Activated CD4-positive, alpha-beta T cell treated with anti-CD3 and anti-CD28 coated beads for 36 hours (primary cell): ENCODE measurements at regions of chr18 and their contacts with region 1.

Region 1: GRCh38 chr18:35949903-35950627 is 22.4 kb upstream of the RMP24 start:
- DNase-seq: peak; percentile 67
- ATAC-seq: peak; percentile 70
- H3K4me3 Mint-ChIP-seq: peak overlapping the region; percentile 75
- H3K27ac Mint-ChIP-seq: no peak overlapping the region
- H3K4me1 Mint-ChIP-seq: peaks cover 1% of the 10 kb centered on the region
- H3K27me3 Mint-ChIP-seq: peaks cover 19% of the 10 kb centered on the region

Region 2: DNA sequence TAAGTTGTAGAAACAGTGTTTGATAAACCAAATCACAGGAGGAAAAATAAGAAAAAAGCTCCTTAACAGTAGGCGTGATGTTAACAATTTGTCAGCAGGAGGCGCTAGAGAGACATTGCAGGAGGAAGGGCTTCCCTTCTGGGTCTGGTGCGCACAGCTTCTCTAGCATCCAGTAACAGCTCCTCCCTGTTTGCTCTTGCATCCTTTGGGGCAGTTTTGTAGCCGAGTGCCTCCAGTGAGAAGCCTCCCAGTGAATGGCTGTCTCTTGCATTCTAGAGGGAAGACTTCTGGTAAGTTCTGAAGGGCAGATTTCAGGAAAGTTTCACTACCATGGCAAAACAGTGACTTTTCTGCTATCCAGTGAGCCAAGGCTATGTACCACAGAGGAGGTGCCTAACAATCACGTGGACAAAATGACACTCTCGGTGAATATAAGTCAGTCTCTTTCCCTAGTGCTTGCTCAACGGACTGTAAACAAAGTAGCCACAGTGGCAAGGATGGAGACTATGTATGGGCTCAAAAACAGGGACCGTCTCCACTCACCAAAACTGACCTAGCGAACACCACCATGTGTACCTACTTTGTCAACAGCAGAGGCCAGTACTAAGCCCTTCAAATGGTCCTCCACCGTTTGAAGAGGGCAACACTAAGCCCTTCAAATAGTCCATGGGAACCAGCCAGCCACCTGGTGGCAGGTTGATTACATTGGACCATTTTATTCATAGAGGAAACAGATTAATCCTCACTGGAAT is 563.3 kb before region 1 on chr18:
- CTCF ChIA-PET with region 1: interaction called, 3 read pairs
- POLR2A ChIA-PET with region 1: no interaction called
- intact Hi-C with region 1: loop called (anchors 5 kb)
- DNase-seq: peak; percentile 79
- ATAC-seq: peak; percentile 98
- H3K4me3 Mint-ChIP-seq: no peak overlapping the region
- H3K27ac Mint-ChIP-seq: no peak overlapping the region
- H3K4me1 Mint-ChIP-seq: peaks cover 2% of the 10 kb centered on the region
- H3K27me3 Mint-ChIP-seq: peaks cover 15% of the 10 kb centered on the region

Region 3: DNA sequence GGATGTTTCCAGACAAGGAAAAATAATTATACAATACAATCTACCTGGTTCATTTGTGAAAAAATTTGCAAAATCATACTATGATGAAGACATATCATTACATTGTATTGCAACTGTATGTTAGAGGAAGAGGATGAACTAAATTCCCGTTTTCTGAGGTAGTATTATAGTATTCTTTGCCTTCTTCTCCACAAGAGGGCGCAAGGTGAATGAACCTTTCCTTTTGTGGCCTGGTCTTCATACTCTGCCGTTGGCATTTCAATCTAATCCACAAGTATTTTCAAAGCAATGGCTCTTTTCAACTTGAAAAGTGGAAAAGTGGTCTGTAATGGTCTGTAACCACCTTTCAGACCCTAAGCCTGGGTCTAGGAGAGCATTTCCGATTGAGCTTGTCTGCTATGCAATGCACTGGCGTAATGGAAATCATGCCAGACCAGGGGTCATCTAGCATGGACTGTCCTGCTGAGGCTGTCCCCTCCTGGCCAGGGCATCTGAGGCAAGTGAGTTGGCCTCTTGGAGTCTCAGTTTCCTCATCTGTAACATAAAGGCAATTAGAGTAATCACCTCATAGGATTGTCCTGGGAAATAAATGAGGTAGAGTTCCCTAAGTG is 542.1 kb before region 1 on chr18:
- CTCF ChIA-PET with region 1: no interaction called
- POLR2A ChIA-PET with region 1: no interaction called
- intact Hi-C with region 1: loop called (anchors 5 kb)
- DNase-seq: peak; percentile 49
- ATAC-seq: peak; percentile 92
- H3K4me3 Mint-ChIP-seq: no peak overlapping the region
- H3K27ac Mint-ChIP-seq: no peak overlapping the region
- H3K4me1 Mint-ChIP-seq: peaks cover 10% of the 10 kb centered on the region
- H3K27me3 Mint-ChIP-seq: peaks cover 6% of the 10 kb centered on the region

Region 4: GRCh38 chr18:35588995-35589394 is 361.1 kb before region 1 on chr18:
- CTCF ChIA-PET with region 1: no interaction called
- POLR2A ChIA-PET with region 1: no interaction called
- intact Hi-C with region 1: loop called in 1 of 2 experiments (anchors 2 kb)
- DNase-seq: peak; percentile 41
- ATAC-seq: peak; percentile 80
- H3K4me3 Mint-ChIP-seq: no peak overlapping the region
- H3K27ac Mint-ChIP-seq: no peak overlapping the region
- H3K4me1 Mint-ChIP-seq: peaks cover 27% of the 10 kb centered on the region
- H3K27me3 Mint-ChIP-seq: no peaks in the 10 kb centered on the region

Region 5: GRCh38 chr18:35756506-35757117 is 193.5 kb before region 1 on chr18:
- CTCF ChIA-PET with region 1: interaction called, 22 read pairs
- POLR2A ChIA-PET with region 1: no interaction called
- intact Hi-C with region 1: loop called (anchors 1 kb)
- DNase-seq: peak; percentile 72
- ATAC-seq: peak; percentile 68
- H3K4me3 Mint-ChIP-seq: no peak overlapping the region
- H3K27ac Mint-ChIP-seq: no peak overlapping the region
- H3K4me1 Mint-ChIP-seq: no peaks in the 10 kb centered on the region
- H3K27me3 Mint-ChIP-seq: peaks cover 8% of the 10 kb centered on the region

Region 6: DNA sequence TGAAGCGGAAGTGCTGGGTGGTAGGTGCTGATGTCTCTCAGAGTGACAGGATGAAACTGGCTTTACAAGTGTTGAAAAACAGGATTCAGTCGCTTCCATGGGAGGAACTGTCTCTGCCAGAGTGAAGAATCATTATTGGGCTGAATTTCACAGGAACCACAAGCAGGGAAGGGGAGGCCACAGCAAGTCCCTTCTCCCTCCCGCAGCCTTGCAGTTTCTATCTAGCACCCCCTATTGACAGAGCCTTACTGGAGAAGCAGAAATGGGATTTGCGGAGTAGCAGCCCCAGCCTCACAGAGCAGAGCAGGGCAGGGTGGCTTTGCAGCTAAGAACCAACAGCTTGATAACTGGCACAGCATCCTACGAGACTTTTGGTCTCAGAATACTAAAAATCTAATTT is 10.9 kb before region 1 on chr18:
- CTCF ChIA-PET with region 1: interaction called, 14 read pairs
- POLR2A ChIA-PET with region 1: no interaction called
- intact Hi-C with region 1: no loop called
- DNase-seq: no peak
- ATAC-seq: no peak
- H3K4me3 Mint-ChIP-seq: no peak overlapping the region
- H3K27ac Mint-ChIP-seq: no peak overlapping the region
- H3K4me1 Mint-ChIP-seq: no peaks in the 10 kb centered on the region
- H3K27me3 Mint-ChIP-seq: peaks cover 5% of the 10 kb centered on the region